MCF 10A (cell line): ENCODE measurements at regions of chr19 and their contacts with region 1.

Region 1: GRCh38 chr19:57632987-57633831 is at the start of gene ZNF211:
- DNase-seq: peak; percentile 96
- H3K4me3 Mint-ChIP-seq: peak within 1 kb of the TSS; percentile 96
- H3K27ac Mint-ChIP-seq: peak within 1 kb of the TSS; percentile 94
- H3K4me1 Mint-ChIP-seq: peaks cover 16% of the 10 kb centered on the region
- H3K27me3 Mint-ChIP-seq: no peaks in the 10 kb centered on the region
- CTCF ChIP-seq: no peak
- total RNA-seq, gene ZNF211: 5.7 and 11.4 TPM in 2 replicates

Region 2: DNA sequence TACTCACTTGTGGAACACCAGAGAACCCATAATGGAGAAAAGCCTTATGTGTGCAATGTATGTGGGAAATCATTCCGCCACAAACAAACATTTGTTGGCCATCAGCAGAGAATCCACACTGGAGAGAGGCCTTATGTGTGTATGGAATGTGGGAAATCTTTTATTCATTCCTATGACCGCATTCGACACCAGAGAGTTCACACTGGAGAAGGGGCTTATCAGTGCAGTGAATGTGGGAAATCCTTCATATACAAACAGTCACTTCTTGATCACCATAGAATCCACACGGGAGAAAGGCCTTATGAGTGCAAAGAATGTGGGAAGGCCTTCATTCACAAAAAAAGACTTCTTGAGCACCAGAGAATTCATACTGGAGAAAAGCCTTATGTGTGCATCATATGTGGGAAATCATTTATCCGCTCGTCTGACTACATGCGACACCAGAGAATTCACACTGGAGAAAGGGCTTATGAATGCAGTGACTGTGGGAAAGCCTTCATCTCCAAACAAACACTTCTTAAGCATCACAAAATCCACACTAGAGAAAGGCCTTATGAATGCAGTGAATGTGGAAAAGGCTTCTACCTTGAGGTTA is 95.2 kb before region 1 on chr19:
- CTCF ChIA-PET with region 1: no interaction called
- POLR2A ChIA-PET with region 1: no interaction called
- intact Hi-C with region 1: no loop called
- DNase-seq: no peak
- H3K4me3 Mint-ChIP-seq: no peak overlapping the region
- H3K27ac Mint-ChIP-seq: no peak overlapping the region
- H3K4me1 Mint-ChIP-seq: no peaks in the 10 kb centered on the region
- H3K27me3 Mint-ChIP-seq: no peaks in the 10 kb centered on the region
- CTCF ChIP-seq: no peak

Region 3: GRCh38 chr19:57613941-57614743 is 19.1 kb before region 1 on chr19 and contains the start of gene ZNF134:
- CTCF ChIA-PET with region 1: interaction called, 3 read pairs
- POLR2A ChIA-PET with region 1: interaction called, 16 read pairs
- intact Hi-C with region 1: no loop called
- DNase-seq: peak; percentile 89
- H3K4me3 Mint-ChIP-seq: peak within 1 kb of the TSS; percentile 83
- H3K27ac Mint-ChIP-seq: peak within 1 kb of the TSS; percentile 86
- H3K4me1 Mint-ChIP-seq: peaks cover 16% of the 10 kb centered on the region
- H3K27me3 Mint-ChIP-seq: no peaks in the 10 kb centered on the region
- CTCF ChIP-seq: peak; percentile 27
- total RNA-seq, gene ZNF134: 16.4 and 18.8 TPM in 2 replicates